BJ (cell line): ENCODE measurements at regions of chr1 and their contacts with region 1.

Region 1: GRCh38 chr1:44237721-44238457 is 24.6 kb downstream of the DMAP1 start:
- DNase-seq: peak; percentile 52
- H3K4me3 ChIP-seq: no peak overlapping the region
- H3K27me3 ChIP-seq: no peaks in the 10 kb centered on the region
- CTCF ChIP-seq: peak; percentile 91

Region 2: GRCh38 chr1:44227211-44227610 is 10.7 kb before region 1 on chr1:
- CTCF ChIA-PET with region 1: interaction called, 57 read pairs
- POLR2A ChIA-PET with region 1: no interaction called
- DNase-seq: no peak
- H3K4me3 ChIP-seq: no peak overlapping the region
- H3K27me3 ChIP-seq: no peaks in the 10 kb centered on the region
- CTCF ChIP-seq: no peak

Region 3: DNA sequence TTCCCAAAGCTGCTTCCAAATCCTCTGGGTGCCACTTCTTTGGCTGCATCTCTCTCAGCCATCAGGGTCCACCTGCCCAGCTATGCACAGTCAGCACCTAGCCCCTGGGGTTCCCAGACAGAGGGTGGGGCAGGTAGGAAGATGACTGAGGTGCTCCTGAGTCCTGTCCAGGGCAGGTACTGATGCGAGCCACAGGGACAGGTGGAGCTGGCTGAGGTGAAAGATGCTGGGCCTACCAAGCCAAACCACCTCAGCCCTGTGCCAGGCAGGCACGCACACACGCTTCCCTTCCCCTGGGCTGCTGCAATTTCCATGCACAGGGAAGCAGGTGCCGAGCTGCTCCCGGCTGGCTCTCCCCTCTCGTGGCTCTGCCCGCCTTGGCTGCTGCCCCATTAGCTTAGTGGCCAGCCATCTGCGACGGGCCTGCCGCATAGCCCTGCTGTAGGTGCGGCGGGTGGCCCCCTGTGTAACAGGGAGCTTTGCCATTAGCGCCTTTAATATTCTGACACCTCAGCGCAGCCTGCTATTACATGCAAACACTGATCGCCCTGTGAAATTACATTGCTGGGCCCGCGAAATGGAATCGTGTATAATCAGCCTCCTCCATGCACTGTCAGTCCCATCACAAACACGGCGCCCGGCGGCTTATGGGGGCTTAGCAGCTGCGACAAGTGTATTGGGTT is 14.2 kb after region 1 on chr1:
- CTCF ChIA-PET with region 1: interaction called, 15 read pairs
- POLR2A ChIA-PET with region 1: no interaction called
- DNase-seq: no peak
- H3K4me3 ChIP-seq: no peak overlapping the region
- H3K27me3 ChIP-seq: no peaks in the 10 kb centered on the region
- CTCF ChIP-seq: no peak